PC-3 (cell line): ENCODE measurements at regions of chr1 and their contacts with region 1.

Region 1: DNA sequence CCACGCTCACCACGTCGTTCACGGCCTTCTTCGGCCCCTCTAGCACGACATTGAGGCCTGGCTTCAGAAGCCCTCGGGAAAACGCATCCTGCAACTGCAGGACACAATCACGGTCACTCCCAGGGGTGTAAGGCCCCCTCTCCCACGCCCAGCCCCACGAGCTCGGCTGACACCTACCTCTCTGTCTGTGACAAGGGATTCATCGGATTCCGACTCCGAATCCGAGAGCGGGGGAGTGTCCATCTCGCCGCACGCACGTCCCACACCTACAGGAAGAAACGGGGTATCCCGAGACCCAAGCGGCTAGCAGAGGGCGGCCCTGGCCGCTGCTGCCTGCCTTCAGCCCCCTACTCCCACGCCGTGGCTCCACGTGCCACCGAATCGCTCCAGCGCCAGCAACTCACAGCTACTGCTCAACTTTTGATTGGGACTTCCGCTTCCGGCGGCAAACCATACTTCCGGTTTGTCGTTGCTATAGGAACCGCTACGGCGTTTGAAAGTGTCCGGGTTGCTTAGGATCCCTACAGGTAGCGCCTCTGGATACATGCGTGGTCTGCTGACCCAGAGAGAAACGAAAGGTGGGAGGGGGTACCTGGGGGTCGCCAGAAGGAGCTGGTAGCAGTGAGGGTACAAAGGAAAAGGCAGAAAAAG is at the starts of genes CFAP57 and EBNA1BP2:
- DNase-seq: peak; percentile 96
- ATAC-seq: peak; percentile 93
- H3K4me3 ChIP-seq: peak within 1 kb of the TSS; percentile 100
- H3K27ac ChIP-seq: peak within 1 kb of the TSS; percentile 21; the same call in 1 of the 2 replicates
- H3K4me1 ChIP-seq: peaks cover 12% of the 10 kb centered on the region
- H3K27me3 ChIP-seq: no peaks in the 10 kb centered on the region
- CTCF ChIP-seq: no peak
- total RNA-seq, gene CFAP57: 1.2 and 2.6 TPM in 2 replicates
- total RNA-seq, gene EBNA1BP2: 274 and 338 TPM in 2 replicates

Region 2: DNA sequence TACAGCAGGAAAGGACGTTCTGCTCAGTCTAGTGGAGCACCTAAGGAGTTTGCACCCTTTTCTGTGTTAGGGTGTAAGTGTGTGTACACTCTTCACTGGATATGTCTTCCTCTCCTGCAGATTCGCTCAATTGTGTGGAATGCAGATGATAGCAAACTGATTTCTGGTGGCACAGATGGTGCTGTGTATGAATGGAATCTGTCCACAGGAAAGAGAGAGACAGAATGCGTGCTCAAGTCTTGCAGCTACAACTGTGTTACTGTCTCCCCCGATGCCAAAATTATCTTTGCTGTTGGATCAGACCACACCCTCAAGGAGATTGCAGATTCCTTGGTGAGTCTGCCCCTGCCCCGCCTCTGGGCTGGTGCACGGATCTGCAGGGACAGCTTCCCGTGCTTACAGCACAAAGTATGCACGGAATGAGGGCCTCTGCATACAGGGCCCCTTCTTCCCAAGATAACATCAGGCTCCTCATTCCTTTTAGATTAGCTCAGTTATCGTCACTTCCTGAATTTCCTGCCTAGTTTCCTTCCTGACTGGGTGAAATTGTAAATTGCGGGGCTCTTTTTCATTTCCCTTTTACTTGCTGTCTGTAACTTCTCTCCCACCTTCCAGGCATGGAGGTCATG is 34.7 kb after region 1 on chr1:
- CTCF ChIA-PET with region 1: no interaction called
- POLR2A ChIA-PET with region 1: interaction called, 6 read pairs
- intact Hi-C with region 1: loop called (anchors 1 kb)
- DNase-seq: peak; percentile 98
- ATAC-seq: peak; percentile 99
- H3K4me3 ChIP-seq: peak overlapping the region; percentile 17
- H3K27ac ChIP-seq: peak overlapping the region; percentile 95
- H3K4me1 ChIP-seq: peaks cover 31% of the 10 kb centered on the region
- H3K27me3 ChIP-seq: no peaks in the 10 kb centered on the region
- CTCF ChIP-seq: no peak